CD8-positive, alpha-beta memory T cell (primary cell): ENCODE measurements at regions of chr9 and their contacts with region 1.

Region 1: DNA sequence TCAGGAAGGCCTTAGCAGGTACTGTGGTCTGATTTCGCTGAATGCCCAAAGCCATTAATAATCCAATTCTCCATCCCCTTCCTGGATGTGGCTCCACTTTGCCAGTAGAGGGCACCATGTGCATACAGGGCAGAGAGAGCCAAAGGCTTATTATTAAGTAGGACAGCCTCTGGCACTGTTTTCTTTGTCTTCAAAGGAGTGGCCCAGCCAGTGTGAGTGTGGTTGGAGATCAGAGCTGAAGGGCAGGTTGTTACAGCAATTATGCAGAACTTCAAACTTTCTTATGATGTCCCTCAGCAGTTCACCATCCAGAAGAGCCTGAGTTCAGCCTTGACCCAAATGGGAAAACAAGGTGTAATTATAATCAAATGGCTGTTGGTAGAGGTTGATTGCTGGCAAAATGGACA is 38.6 kb upstream of the CEMIP2 start:
- DNase-seq: peak; percentile 29 to 77 (median 56)
- H3K4me3 ChIP-seq: no peak overlapping the region
- H3K4me3 Mint-ChIP-seq: no peak overlapping the region
- H3K27ac ChIP-seq: no peak overlapping the region
- H3K27ac Mint-ChIP-seq: peak overlapping the region in 4 of 8 donors; percentile 8 to 81 (median 29)
- H3K4me1 ChIP-seq: peaks cover 9% of the 10 kb centered on the region
- H3K4me1 Mint-ChIP-seq: peaks cover 7% of the 10 kb centered on the region in 3 donors
- H3K27me3 ChIP-seq: no peaks in the 10 kb centered on the region
- H3K27me3 Mint-ChIP-seq: no peaks in the 10 kb centered on the region

Region 2: DNA sequence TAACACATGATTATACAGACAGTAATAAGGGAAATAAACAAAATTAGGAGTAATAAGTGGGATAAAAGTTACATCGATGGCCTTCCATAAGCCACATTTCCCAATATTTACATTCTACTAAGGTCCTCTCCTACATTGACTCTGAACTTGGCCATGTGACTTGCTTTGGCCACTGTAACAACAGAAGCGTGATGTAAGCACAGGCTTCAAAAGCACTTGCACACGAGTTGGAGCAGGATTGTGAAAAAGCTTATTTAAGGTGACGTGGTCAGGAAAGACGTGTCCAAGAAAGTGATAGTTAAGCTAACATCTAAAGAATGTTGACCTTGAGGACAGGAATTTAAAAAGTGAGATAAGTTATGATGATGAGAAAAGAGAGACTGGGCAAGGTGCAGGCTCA is 28.8 kb before region 1 on chr9:
- CTCF ChIA-PET with region 1: interaction called, 95 read pairs
- POLR2A ChIA-PET with region 1: interaction called, 12 read pairs
- DNase-seq: no peak
- H3K4me3 ChIP-seq: no peak overlapping the region
- H3K4me3 Mint-ChIP-seq: no peak overlapping the region
- H3K27ac ChIP-seq: no peak overlapping the region
- H3K27ac Mint-ChIP-seq: peak overlapping the region in 6 of 8 donors; percentile 18 to 89 (median 50)
- H3K4me1 ChIP-seq: peaks cover 30% of the 10 kb centered on the region
- H3K4me1 Mint-ChIP-seq: peaks cover 34 to 59% (median 39%) of the 10 kb centered on the region in 3 donors
- H3K27me3 ChIP-seq: no peaks in the 10 kb centered on the region
- H3K27me3 Mint-ChIP-seq: no peaks in the 10 kb centered on the region

Region 3: DNA sequence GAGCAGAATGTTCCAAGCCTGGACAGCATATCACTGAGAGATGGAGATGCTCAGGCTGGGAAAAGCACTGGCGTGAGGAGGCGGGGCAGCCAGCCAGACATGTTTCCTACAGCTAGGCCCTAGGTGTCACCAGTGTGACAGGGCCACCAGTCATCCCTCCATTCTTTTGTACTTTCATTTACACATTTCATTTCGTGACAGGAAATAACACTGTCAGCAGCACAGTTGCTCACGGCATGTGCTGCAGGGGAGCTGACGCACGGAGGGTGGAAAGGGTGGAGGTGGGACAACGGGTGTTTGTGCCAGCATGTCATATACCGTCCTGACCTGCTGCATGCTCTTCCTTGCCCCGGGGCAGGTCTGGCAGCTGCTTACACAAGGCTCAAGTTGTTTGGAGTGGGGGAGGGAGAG is 23.8 kb before region 1 on chr9:
- CTCF ChIA-PET with region 1: interaction called, 95 read pairs
- POLR2A ChIA-PET with region 1: interaction called, 12 read pairs
- DNase-seq: peak; percentile 73 to 95 (median 88)
- H3K4me3 ChIP-seq: peak overlapping the region; percentile 7
- H3K4me3 Mint-ChIP-seq: peak overlapping the region; percentile 6 to 84 (median 80)
- H3K27ac ChIP-seq: peak overlapping the region; percentile 77
- H3K27ac Mint-ChIP-seq: peak overlapping the region; percentile 89 to 100 (median 98)
- H3K4me1 ChIP-seq: peaks cover 39% of the 10 kb centered on the region
- H3K4me1 Mint-ChIP-seq: peaks cover 47 to 59% (median 49%) of the 10 kb centered on the region in 3 donors
- H3K27me3 ChIP-seq: no peaks in the 10 kb centered on the region
- H3K27me3 Mint-ChIP-seq: no peaks in the 10 kb centered on the region

Region 4: GRCh38 chr9:71795097-71795813 is 11.6 kb before region 1 on chr9:
- CTCF ChIA-PET with region 1: interaction called, 33 read pairs
- POLR2A ChIA-PET with region 1: no interaction called
- DNase-seq: peak in 2 of 5 donors; percentile 65 to 77
- H3K4me3 ChIP-seq: peak overlapping the region; percentile 21
- H3K4me3 Mint-ChIP-seq: peak overlapping the region; percentile 16 to 74 (median 61)
- H3K27ac ChIP-seq: peak overlapping the region; percentile 2
- H3K27ac Mint-ChIP-seq: peak overlapping the region; percentile 76 to 98 (median 93)
- H3K4me1 ChIP-seq: peaks cover 60% of the 10 kb centered on the region
- H3K4me1 Mint-ChIP-seq: peaks cover 48 to 64% (median 62%) of the 10 kb centered on the region in 3 donors
- H3K27me3 ChIP-seq: no peaks in the 10 kb centered on the region
- H3K27me3 Mint-ChIP-seq: no peaks in the 10 kb centered on the region

Region 5: DNA sequence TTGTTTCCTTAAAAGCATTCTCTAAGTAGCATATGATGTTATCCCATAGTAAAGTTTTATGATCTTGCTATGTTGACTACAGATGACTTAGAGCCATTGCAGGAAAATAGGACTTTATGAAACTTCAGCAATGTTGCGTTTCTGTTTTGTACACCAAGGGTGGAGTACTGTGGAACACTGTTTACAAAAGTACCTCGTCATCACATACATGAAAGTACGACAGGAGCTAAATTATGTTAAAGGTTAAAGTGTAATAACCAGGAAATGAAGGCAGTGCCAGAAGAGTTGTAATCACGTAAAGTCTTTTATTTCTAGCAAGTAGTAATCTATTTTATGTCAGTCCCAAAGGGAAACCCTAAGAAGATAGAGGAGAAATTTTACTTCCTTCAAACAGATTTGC is 155.4 kb after region 1 on chr9:
- CTCF ChIA-PET with region 1: no interaction called
- POLR2A ChIA-PET with region 1: no interaction called
- DNase-seq: no peak
- H3K4me3 ChIP-seq: no peak overlapping the region
- H3K4me3 Mint-ChIP-seq: no peak overlapping the region
- H3K27ac ChIP-seq: no peak overlapping the region
- H3K27ac Mint-ChIP-seq: no peak overlapping the region
- H3K4me1 ChIP-seq: no peaks in the 10 kb centered on the region
- H3K4me1 Mint-ChIP-seq: peaks cover 0 to 11% (median 5%) of the 10 kb centered on the region in 3 donors
- H3K27me3 ChIP-seq: no peaks in the 10 kb centered on the region
- H3K27me3 Mint-ChIP-seq: no peaks in the 10 kb centered on the region

Region 6: GRCh38 chr9:72022841-72023240 is 215.9 kb after region 1 on chr9:
- CTCF ChIA-PET with region 1: interaction called, 30 read pairs
- POLR2A ChIA-PET with region 1: no interaction called
- DNase-seq: no peak
- H3K4me3 ChIP-seq: no peak overlapping the region
- H3K4me3 Mint-ChIP-seq: no peak overlapping the region
- H3K27ac ChIP-seq: no peak overlapping the region
- H3K27ac Mint-ChIP-seq: peak overlapping the region in 1 of 8 donors; percentile 29
- H3K4me1 ChIP-seq: no peaks in the 10 kb centered on the region
- H3K4me1 Mint-ChIP-seq: peaks cover 0 to 2% (median 2%) of the 10 kb centered on the region in 3 donors
- H3K27me3 ChIP-seq: no peaks in the 10 kb centered on the region
- H3K27me3 Mint-ChIP-seq: no peaks in the 10 kb centered on the region